A673 (cell line): ENCODE measurements at regions of chr7 and their contacts with region 1.

Region 1: GRCh38 chr7:133971625-133972024 is 155.5 kb upstream of the LRGUK start:
- DNase-seq: no peak
- H3K4me3 ChIP-seq: no peak overlapping the region
- H3K27ac ChIP-seq: no peak overlapping the region
- H3K4me1 ChIP-seq: no peaks in the 10 kb centered on the region
- H3K27me3 ChIP-seq: no peaks in the 10 kb centered on the region
- CTCF ChIP-seq: no peak

Region 2: DNA sequence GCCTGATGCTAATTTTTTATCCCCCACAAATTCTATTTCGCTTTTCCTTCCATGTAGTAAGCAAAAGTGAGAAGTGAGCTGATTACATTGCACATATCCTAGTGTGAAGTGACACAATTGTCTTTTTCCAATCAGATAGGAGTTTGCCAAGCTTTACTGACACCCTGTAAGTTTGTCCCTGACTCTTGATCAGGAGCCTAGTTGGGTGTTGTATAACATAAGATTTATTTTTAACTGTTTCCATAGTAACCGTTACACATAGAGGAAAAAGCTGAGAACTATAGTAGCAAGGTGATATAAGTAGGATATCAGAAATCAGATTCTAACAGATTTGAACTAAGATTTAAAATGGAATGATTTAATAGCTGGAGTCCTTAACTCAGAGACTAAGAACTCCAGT is 687.5 kb before region 1 on chr7:
- CTCF ChIA-PET with region 1: no interaction called
- POLR2A ChIA-PET with region 1: no interaction called
- intact Hi-C with region 1: no loop called
- DNase-seq: no peak
- H3K4me3 ChIP-seq: no peak overlapping the region
- H3K27ac ChIP-seq: no peak overlapping the region
- H3K4me1 ChIP-seq: no peaks in the 10 kb centered on the region
- H3K27me3 ChIP-seq: no peaks in the 10 kb centered on the region
- CTCF ChIP-seq: no peak

Region 3: GRCh38 chr7:133412942-133413341 is 558.7 kb before region 1 on chr7:
- CTCF ChIA-PET with region 1: no interaction called
- POLR2A ChIA-PET with region 1: no interaction called
- intact Hi-C with region 1: no loop called
- DNase-seq: no peak
- H3K4me3 ChIP-seq: no peak overlapping the region
- H3K27ac ChIP-seq: no peak overlapping the region
- H3K4me1 ChIP-seq: no peaks in the 10 kb centered on the region
- H3K27me3 ChIP-seq: no peaks in the 10 kb centered on the region
- CTCF ChIP-seq: no peak

Region 4: DNA sequence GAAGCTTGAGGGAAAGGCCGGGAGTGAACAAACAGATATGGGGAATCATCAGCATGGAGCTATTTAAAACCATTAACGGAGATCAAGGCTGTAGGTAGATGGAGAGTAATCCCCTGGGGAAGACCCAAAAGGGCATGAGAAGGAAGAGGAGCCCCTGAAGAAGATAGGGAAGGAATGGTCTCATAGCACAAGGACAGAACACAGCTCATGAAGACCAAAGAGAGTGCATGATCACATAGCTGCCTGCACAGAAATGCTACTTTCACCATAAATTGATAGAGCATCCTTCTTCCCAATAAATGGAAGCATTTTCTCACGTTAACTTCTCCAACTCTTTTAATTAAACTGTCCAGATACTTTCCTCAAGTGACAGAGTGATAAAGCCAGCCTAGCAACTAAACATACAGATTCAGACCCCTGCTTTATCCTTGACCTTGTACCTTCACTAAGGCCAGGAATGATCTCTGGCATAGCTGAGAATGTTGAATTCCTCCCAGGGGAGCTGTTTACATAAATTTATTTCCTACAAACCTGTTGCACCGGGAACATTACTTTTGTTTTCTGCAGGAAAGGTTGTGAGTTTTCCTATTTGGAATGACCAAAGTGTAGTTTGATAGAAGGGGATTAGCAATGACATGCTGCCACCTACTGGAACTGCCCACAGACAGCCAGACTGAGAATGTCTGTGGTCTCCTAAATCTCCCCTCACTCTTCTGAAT is 44.8 kb after region 1 on chr7:
- CTCF ChIA-PET with region 1: no interaction called
- POLR2A ChIA-PET with region 1: no interaction called
- intact Hi-C with region 1: no loop called
- DNase-seq: peak; percentile 25
- H3K4me3 ChIP-seq: no peak overlapping the region
- H3K27ac ChIP-seq: no peak overlapping the region
- H3K4me1 ChIP-seq: no peaks in the 10 kb centered on the region
- H3K27me3 ChIP-seq: no peaks in the 10 kb centered on the region
- CTCF ChIP-seq: peak; percentile 72

Region 5: DNA sequence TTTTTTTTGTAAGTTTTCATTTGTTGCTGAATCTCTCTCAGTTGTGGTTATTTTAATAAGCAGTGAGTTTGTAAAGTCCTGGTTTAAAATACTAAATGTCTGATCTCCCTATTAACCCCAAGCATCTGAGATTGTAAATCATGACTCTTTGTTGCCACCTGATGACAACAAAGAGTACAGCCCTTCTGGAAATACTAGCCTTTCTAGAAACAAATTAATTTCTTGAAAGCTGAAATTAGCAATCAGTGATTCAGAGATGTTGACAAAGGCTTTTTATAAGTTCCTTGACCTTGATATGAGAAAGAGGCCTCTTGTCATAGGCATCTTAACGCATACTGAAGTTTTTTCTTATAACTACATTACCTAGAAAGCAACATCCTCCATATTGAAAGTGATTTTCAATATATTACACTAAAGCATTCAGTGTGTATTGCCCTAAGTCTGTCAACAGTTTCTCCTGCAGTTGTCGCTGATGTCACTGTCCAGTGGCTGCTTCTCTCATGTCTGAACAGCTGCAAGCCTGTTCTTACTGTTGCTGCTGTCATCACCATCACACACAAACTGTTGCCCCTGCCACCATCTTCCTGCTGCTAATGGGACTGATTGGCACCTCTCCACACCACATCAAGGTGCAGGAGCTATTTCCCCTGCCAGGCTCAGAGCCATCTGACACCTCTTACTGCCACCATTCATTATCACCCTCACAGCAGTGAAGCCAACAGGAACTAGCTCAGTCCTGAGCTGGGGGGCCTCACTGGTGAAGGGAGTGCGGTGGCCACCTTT is 60.4 kb after region 1 on chr7:
- CTCF ChIA-PET with region 1: no interaction called
- POLR2A ChIA-PET with region 1: interaction called, 10 read pairs
- intact Hi-C with region 1: no loop called
- DNase-seq: no peak
- H3K4me3 ChIP-seq: no peak overlapping the region
- H3K27ac ChIP-seq: no peak overlapping the region
- H3K4me1 ChIP-seq: no peaks in the 10 kb centered on the region
- H3K27me3 ChIP-seq: no peaks in the 10 kb centered on the region
- CTCF ChIP-seq: no peak; the same call in 1 of the 2 replicates

Region 6: GRCh38 chr7:134254311-134254710 is 282.7 kb after region 1 on chr7:
- CTCF ChIA-PET with region 1: no interaction called
- POLR2A ChIA-PET with region 1: no interaction called
- intact Hi-C with region 1: no loop called
- DNase-seq: peak; percentile 9
- H3K4me3 ChIP-seq: no peak overlapping the region
- H3K27ac ChIP-seq: no peak overlapping the region
- H3K4me1 ChIP-seq: no peaks in the 10 kb centered on the region
- H3K27me3 ChIP-seq: no peaks in the 10 kb centered on the region
- CTCF ChIP-seq: peak; percentile 26; the same call in 1 of the 2 replicates